ENCODE measurements at regions of chr2 and their contacts with region 1.

Region 1: DNA sequence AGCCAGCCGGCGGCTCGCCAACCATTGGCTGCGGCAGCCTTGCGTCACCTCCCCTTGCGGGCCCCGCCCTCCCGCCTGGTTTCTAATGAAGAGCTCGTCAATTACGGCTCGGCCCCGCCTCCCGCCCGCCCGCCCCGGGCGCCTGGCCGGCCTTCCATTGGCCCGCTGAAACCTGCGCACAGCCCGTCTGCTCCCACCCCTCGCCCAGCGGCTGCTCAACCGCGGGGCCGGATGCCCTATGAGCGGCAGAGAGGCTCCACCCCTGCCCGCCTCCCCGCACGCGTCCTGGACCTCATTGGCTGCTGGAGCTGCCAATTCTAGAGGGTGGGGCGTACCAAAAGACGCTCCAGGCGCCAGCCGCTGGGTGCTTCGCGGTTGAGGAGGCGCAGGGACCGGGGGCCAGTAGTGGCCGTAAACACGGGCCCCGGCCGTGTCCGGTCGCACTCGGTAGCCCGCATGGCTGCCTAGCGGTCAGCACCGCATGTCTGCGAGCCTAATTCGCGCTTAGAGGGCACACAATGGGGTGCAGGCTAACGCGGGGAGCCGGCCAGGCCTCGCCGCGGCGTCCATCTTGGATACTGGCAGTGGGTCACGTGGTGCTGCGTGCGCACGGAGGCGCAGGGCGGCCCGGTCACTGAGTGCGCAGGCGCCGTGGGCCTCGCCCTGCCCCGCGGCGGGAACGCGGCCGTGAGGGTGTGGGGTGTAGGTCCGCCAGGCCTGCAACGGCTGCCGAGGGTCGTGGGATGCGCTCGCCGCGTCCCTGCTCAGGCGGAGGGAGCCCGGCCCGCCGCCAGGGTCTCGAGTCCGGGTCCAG is 454 bp upstream of the HDAC4 start:
- DNase-seq: peak; percentile 98 to 100 (median 100)
- ATAC-seq: peak; percentile 92
- H3K4me3 ChIP-seq: peak overlapping the region; percentile 100
- H3K4me3 Mint-ChIP-seq: peak overlapping the region; percentile 86 to 96 (median 92)
- H3K27ac ChIP-seq: peak overlapping the region; percentile 97
- H3K27ac Mint-ChIP-seq: peak overlapping the region; percentile 96 to 99 (median 99)
- H3K4me1 ChIP-seq: peaks cover 17 to 26% of the 10 kb centered on the region in 2 donors
- H3K4me1 Mint-ChIP-seq: peaks cover 28 to 51% (median 43%) of the 10 kb centered on the region in 7 donors
- H3K27me3 ChIP-seq: no peaks in the 10 kb centered on the region
- H3K27me3 Mint-ChIP-seq: peaks cover 0 to 16% (median 0%) of the 10 kb centered on the region in 5 donors

Region 2: DNA sequence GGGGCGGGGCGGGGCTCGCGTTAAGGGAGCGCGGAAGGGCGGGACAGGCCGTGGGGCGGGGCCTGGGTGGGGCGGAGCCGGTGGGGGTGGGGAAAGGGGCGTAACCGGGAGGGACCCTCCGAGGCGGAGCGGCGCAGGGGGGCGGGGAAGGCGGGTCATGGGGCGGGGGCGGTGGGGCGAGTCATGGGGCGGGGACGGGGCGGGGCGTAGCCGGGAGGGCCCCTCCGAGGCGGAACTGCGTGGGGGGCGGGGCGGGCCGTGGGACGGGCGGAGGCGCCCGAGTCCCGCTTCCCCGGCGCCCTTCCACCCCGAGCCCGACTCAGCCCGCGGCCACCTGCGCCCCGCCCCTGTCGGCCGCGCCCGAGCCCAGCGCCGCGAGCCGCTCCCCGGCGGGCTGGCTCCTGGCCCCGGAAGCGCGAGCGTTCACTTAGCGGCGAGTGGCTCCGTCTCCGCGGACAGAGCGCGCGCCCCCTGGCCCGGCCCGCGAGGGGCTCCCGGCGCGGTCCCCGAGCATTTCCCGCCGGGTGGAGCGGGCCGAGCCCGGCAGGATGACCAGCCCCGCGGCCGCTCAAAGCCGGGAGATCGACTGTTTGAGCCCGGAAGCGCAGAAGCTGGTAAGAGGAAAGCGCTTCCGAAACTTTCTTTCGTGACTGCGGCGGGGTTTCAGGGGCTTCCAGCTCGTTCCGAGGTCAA is 1709.2 kb before region 1 on chr2:
- CTCF ChIA-PET with region 1: no interaction called
- POLR2A ChIA-PET with region 1: no interaction called
- intact Hi-C with region 1: loop called in 1 of 2 experiments (anchors 5 kb)
- DNase-seq: peak; percentile 84 to 97 (median 90)
- ATAC-seq: peak; percentile 75
- H3K4me3 ChIP-seq: peak overlapping the region; percentile 82
- H3K4me3 Mint-ChIP-seq: peak overlapping the region; percentile 86 to 98 (median 92)
- H3K27ac ChIP-seq: peak overlapping the region; percentile 97
- H3K27ac Mint-ChIP-seq: peak overlapping the region; percentile 89 to 98 (median 94)
- H3K4me1 ChIP-seq: peaks cover 61 to 63% of the 10 kb centered on the region in 2 donors
- H3K4me1 Mint-ChIP-seq: peaks cover 59 to 86% (median 74%) of the 10 kb centered on the region in 7 donors
- H3K27me3 ChIP-seq: no peaks in the 10 kb centered on the region
- H3K27me3 Mint-ChIP-seq: no peaks in the 10 kb centered on the region

Region 3: DNA sequence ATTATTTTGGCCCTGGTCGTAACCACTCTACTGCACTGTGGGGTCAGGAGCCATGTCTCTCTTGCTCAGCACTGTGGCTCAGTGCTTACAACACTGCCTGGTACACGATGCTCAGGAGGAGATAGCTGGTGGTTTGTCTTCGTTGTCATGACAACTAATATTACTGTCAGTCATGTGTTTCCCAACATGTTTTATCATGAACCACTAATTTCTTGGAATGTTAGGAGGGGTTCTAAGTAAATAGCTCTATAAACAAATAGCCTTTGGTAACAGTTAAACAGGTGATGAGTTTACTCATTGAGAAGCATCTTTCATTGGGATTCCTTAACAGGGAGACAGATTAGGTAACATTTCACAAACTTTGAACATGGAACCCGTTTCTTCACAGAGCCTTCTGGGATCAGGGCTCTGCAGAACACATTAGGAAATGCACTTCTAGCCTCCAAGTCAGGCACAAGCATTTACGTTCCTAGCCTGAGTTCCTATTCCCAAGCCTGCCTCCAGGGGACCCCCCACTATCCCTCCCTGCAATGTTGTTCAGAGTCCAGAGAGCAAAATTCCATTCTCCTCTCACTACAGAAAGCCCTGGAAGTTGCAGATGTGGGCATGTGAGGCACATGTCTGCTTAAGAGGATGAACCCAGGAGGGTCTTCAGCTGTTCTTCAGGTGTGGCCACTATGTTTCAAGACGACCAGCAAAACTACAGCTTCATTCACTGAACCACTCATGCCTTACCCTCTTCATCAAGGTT is 1609.1 kb before region 1 on chr2:
- CTCF ChIA-PET with region 1: no interaction called
- POLR2A ChIA-PET with region 1: no interaction called
- intact Hi-C with region 1: no loop called
- DNase-seq: no peak
- ATAC-seq: no peak
- H3K4me3 ChIP-seq: no peak overlapping the region
- H3K4me3 Mint-ChIP-seq: no peak overlapping the region
- H3K27ac ChIP-seq: no peak overlapping the region
- H3K27ac Mint-ChIP-seq: peak overlapping the region in 1 of 9 donors; percentile 74
- H3K4me1 ChIP-seq: no peaks in the 10 kb centered on the region
- H3K4me1 Mint-ChIP-seq: peaks cover 0 to 18% (median 4%) of the 10 kb centered on the region in 7 donors
- H3K27me3 ChIP-seq: no peaks in the 10 kb centered on the region
- H3K27me3 Mint-ChIP-seq: no peaks in the 10 kb centered on the region

Region 4: GRCh38 chr2:239151201-239152131 is 249.8 kb before region 1 on chr2:
- CTCF ChIA-PET with region 1: no interaction called
- POLR2A ChIA-PET with region 1: no interaction called
- intact Hi-C with region 1: loop called (anchors 2 to 10 kb)
- DNase-seq: peak in 1 of 9 donors; percentile 0
- ATAC-seq: no peak
- H3K4me3 ChIP-seq: no peak overlapping the region
- H3K4me3 Mint-ChIP-seq: peak overlapping the region in 2 of 10 donors; percentile 42 to 54
- H3K27ac ChIP-seq: peak overlapping the region; percentile 39
- H3K27ac Mint-ChIP-seq: peak overlapping the region; percentile 79 to 95 (median 88)
- H3K4me1 ChIP-seq: peaks cover 8 to 20% of the 10 kb centered on the region in 2 donors
- H3K4me1 Mint-ChIP-seq: peaks cover 9 to 37% (median 25%) of the 10 kb centered on the region in 7 donors
- H3K27me3 ChIP-seq: no peaks in the 10 kb centered on the region
- H3K27me3 Mint-ChIP-seq: no peaks in the 10 kb centered on the region

Region 5: GRCh38 chr2:239318790-239319661 is 82.2 kb before region 1 on chr2:
- CTCF ChIA-PET with region 1: interaction called, 5 read pairs
- POLR2A ChIA-PET with region 1: interaction called, 9 read pairs
- intact Hi-C with region 1: loop called (anchors 1 kb)
- DNase-seq: peak in 4 of 9 donors; percentile 6 to 31 (median 28)
- ATAC-seq: peak; percentile 5
- H3K4me3 ChIP-seq: no peak overlapping the region
- H3K4me3 Mint-ChIP-seq: peak overlapping the region; percentile 78 to 90 (median 88)
- H3K27ac ChIP-seq: peak overlapping the region; percentile 64
- H3K27ac Mint-ChIP-seq: peak overlapping the region; percentile 93 to 100 (median 98)
- H3K4me1 ChIP-seq: peaks cover 31 to 41% of the 10 kb centered on the region in 2 donors
- H3K4me1 Mint-ChIP-seq: peaks cover 34 to 91% (median 78%) of the 10 kb centered on the region in 7 donors
- H3K27me3 ChIP-seq: no peaks in the 10 kb centered on the region
- H3K27me3 Mint-ChIP-seq: no peaks in the 10 kb centered on the region

Region 6: GRCh38 chr2:239380831-239381708 is 20.2 kb before region 1 on chr2:
- CTCF ChIA-PET with region 1: interaction called, 5 read pairs
- POLR2A ChIA-PET with region 1: interaction called, 21 read pairs
- intact Hi-C with region 1: loop called (anchors 1 kb)
- DNase-seq: peak; percentile 34 to 87 (median 81)
- ATAC-seq: peak; percentile 91
- H3K4me3 ChIP-seq: peak overlapping the region; percentile 20
- H3K4me3 Mint-ChIP-seq: peak overlapping the region; percentile 69 to 93 (median 88)
- H3K27ac ChIP-seq: peak overlapping the region; percentile 67
- H3K27ac Mint-ChIP-seq: peak overlapping the region; percentile 90 to 99 (median 96)
- H3K4me1 ChIP-seq: peaks cover 0 to 15% of the 10 kb centered on the region in 2 donors
- H3K4me1 Mint-ChIP-seq: peaks cover 21 to 47% (median 35%) of the 10 kb centered on the region in 7 donors
- H3K27me3 ChIP-seq: no peaks in the 10 kb centered on the region
- H3K27me3 Mint-ChIP-seq: no peaks in the 10 kb centered on the region

Region 7: GRCh38 chr2:240136013-240136670 is 734.9 kb after region 1 on chr2 and contains the start of gene COPS9:
- CTCF ChIA-PET with region 1: no interaction called
- POLR2A ChIA-PET with region 1: no interaction called
- intact Hi-C with region 1: loop called (anchors 2 to 5 kb)
- DNase-seq: peak; percentile 74 to 89 (median 82)
- ATAC-seq: peak; percentile 98
- H3K4me3 ChIP-seq: peak within 1 kb of the TSS; percentile 95
- H3K4me3 Mint-ChIP-seq: peak within 1 kb of the TSS; percentile 79 to 97 (median 93)
- H3K27ac ChIP-seq: peak within 1 kb of the TSS; percentile 75
- H3K27ac Mint-ChIP-seq: peak within 1 kb of the TSS; percentile 78 to 95 (median 90)
- H3K4me1 ChIP-seq: peaks cover 17 to 18% of the 10 kb centered on the region in 2 donors
- H3K4me1 Mint-ChIP-seq: peaks cover 21 to 32% (median 28%) of the 10 kb centered on the region in 7 donors
- H3K27me3 ChIP-seq: no peaks in the 10 kb centered on the region
- H3K27me3 Mint-ChIP-seq: peaks cover 0 to 4% (median 0%) of the 10 kb centered on the region in 5 donors
- total RNA-seq, gene COPS9: 53.7 to 106 (median 71.8) TPM

Measured in naive thymus-derived CD4-positive, alpha-beta T cell (primary cell).